ENCODE measurements at regions of chr1 and their contacts with region 1.

Region 1: DNA sequence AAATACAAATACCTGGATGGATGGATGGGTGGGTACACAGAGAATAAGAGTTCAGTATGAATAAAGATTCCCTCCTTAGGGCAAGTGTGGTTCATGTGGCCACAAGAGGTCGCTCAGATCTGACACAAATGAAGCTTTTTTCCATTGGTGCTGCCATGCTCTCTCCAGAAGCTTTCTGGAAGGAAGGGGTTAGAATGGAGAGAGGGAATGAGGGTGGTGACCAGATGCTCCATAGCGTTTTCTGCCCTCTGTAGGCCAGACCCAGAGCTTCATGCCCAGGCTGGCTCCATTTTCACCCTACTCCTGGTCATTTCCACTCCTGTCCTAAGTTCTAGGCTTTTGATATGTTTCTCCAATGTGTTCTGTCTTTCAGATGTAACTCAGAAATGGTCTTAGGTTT is 3.3 kb upstream of the FCRL6 start:
- DNase-seq: peak; percentile 63 to 78 (median 65)
- ATAC-seq: peak; percentile 86 to 92
- H3K4me3 ChIP-seq: no peak overlapping the region
- H3K27ac ChIP-seq: no peak overlapping the region
- H3K4me1 ChIP-seq: peaks cover 2% of the 10 kb centered on the region
- H3K27me3 ChIP-seq: no peaks in the 10 kb centered on the region

Region 2: GRCh38 chr1:159891275-159892157 is 92.6 kb after region 1 on chr1:
- intact Hi-C with region 1: loop called (anchors 2 to 5 kb)
- DNase-seq: peak; percentile 84 to 93 (median 92)
- ATAC-seq: peak; percentile 79 to 88
- H3K4me3 ChIP-seq: no peak overlapping the region
- H3K27ac ChIP-seq: no peak overlapping the region
- H3K4me1 ChIP-seq: peaks cover 6% of the 10 kb centered on the region
- H3K27me3 ChIP-seq: no peaks in the 10 kb centered on the region

Region 3: GRCh38 chr1:159936273-159936904 is 137.5 kb after region 1 on chr1:
- intact Hi-C with region 1: loop called in 1 of 4 experiments (anchors 5 kb)
- DNase-seq: peak; percentile 66 to 90 (median 88)
- ATAC-seq: peak; percentile 64
- H3K4me3 ChIP-seq: no peak overlapping the region
- H3K27ac ChIP-seq: no peak overlapping the region
- H3K4me1 ChIP-seq: no peaks in the 10 kb centered on the region
- H3K27me3 ChIP-seq: no peaks in the 10 kb centered on the region

Region 4: GRCh38 chr1:160006312-160006940 is 207.5 kb after region 1 on chr1:
- intact Hi-C with region 1: loop called in 3 of 4 experiments (anchors 10 kb)
- DNase-seq: peak; percentile 68 to 88 (median 87)
- ATAC-seq: peak; percentile 71 to 72
- H3K4me3 ChIP-seq: no peak overlapping the region
- H3K27ac ChIP-seq: no peak overlapping the region
- H3K4me1 ChIP-seq: no peaks in the 10 kb centered on the region
- H3K27me3 ChIP-seq: no peaks in the 10 kb centered on the region